A549 (cell line): ENCODE measurements at regions of chr10 and their contacts with region 1.

Region 1: GRCh38 chr10:77641788-77642397 is 4.3 kb upstream of the KCNMA1 start:
- DNase-seq: peak; percentile 75 to 78
- ATAC-seq: peak in 1 of 2 experiments; percentile 52; a peak in 3 of 6 replicates
- H3K4me3 ChIP-seq: no peak overlapping the region
- H3K27ac ChIP-seq: peak overlapping the region in 1 of 2 experiments; percentile 66; a peak in 2 of 6 replicates
- H3K4me1 ChIP-seq: peaks cover 10% of the 10 kb centered on the region; the same call in 2 of the 3 replicates
- CTCF ChIP-seq: peak; percentile 94
- EP300 ChIP-seq: no peak
- POLR2A ChIP-seq: no peak
- RAD21 ChIP-seq: peak; percentile 96 to 97

Region 2: DNA sequence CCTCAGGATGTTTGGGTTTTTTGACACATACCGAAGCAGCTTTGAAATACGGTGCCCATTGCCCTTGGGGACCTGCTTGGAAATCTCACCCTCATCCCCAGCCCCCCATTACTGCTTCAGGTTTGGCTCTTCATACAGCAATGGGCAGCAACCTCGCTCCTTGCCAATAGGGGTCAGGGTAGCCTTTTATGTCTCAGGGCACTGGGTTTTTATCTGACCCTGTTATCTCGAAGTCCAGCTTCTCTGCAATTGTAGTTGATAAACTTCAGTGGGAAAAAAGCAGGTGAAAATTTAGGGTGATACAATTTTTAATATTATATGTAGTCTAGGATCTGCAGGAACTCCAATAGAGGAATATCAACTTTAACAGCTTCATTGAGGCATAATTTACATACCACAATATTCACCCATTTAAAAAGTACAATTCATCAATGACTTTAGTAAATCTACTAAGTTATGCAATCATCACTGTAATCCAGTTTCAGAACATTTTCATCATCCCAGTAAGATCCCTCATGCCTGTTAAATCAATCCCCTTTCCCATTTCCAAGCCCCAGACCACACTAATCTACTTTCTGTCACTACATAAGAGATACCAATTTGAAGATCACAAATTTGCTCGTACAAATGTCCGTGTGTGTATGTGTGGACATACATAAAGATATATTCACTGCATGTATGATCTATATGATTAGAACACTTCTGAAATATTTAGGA is 390.4 kb before region 1 on chr10:
- CTCF ChIA-PET with region 1: interaction called, 169 read pairs
- POLR2A ChIA-PET with region 1: interaction called, 3 read pairs
- DNase-seq: peak; percentile 63 to 64
- ATAC-seq: peak; percentile 91 to 95
- H3K4me3 ChIP-seq: no peak overlapping the region
- H3K27ac ChIP-seq: peak overlapping the region; percentile 18 to 51; a peak in 3 of 6 replicates
- H3K4me1 ChIP-seq: peaks cover 22% of the 10 kb centered on the region
- CTCF ChIP-seq: peak; percentile 83
- EP300 ChIP-seq: no peak
- POLR2A ChIP-seq: no peak
- RAD21 ChIP-seq: peak; percentile 92 to 94

Region 3: GRCh38 chr10:77498210-77498609 is 143.7 kb before region 1 on chr10:
- CTCF ChIA-PET with region 1: interaction called, 10 read pairs
- POLR2A ChIA-PET with region 1: no interaction called
- DNase-seq: no peak
- ATAC-seq: no peak
- H3K4me3 ChIP-seq: no peak overlapping the region
- H3K27ac ChIP-seq: peak overlapping the region; percentile 47 to 55; a peak in 3 of 6 replicates
- H3K4me1 ChIP-seq: peaks cover 38% of the 10 kb centered on the region
- CTCF ChIP-seq: no peak
- EP300 ChIP-seq: no peak
- POLR2A ChIP-seq: no peak
- RAD21 ChIP-seq: no peak

Region 4: GRCh38 chr10:77513781-77514331 is 128.0 kb before region 1 on chr10:
- CTCF ChIA-PET with region 1: interaction called, 14 read pairs
- POLR2A ChIA-PET with region 1: no interaction called
- DNase-seq: peak; percentile 44 to 55
- ATAC-seq: peak; percentile 85 to 87
- H3K4me3 ChIP-seq: no peak overlapping the region
- H3K27ac ChIP-seq: peak overlapping the region; percentile 48 to 82; a peak in 4 of 6 replicates
- H3K4me1 ChIP-seq: peaks cover 26% of the 10 kb centered on the region
- CTCF ChIP-seq: no peak
- EP300 ChIP-seq: no peak
- POLR2A ChIP-seq: no peak
- RAD21 ChIP-seq: no peak

Region 5: GRCh38 chr10:77710759-77711682 is 69.1 kb after region 1 on chr10:
- CTCF ChIA-PET with region 1: interaction called, 59 read pairs
- POLR2A ChIA-PET with region 1: no interaction called
- DNase-seq: peak; percentile 48 to 62
- ATAC-seq: peak; percentile 95 to 99
- H3K4me3 ChIP-seq: peak overlapping the region; percentile 31; the same call in 2 of the 3 replicates
- H3K27ac ChIP-seq: peak overlapping the region; percentile 40 to 79; a peak in 5 of 6 replicates
- H3K4me1 ChIP-seq: no peaks in the 10 kb centered on the region
- CTCF ChIP-seq: peak; percentile 86
- EP300 ChIP-seq: no peak
- POLR2A ChIP-seq: no peak
- RAD21 ChIP-seq: peak; percentile 82 to 84